CD4-positive, alpha-beta memory T cell (primary cell): ENCODE measurements at regions of chr1 and their contacts with region 1.

Region 1: DNA sequence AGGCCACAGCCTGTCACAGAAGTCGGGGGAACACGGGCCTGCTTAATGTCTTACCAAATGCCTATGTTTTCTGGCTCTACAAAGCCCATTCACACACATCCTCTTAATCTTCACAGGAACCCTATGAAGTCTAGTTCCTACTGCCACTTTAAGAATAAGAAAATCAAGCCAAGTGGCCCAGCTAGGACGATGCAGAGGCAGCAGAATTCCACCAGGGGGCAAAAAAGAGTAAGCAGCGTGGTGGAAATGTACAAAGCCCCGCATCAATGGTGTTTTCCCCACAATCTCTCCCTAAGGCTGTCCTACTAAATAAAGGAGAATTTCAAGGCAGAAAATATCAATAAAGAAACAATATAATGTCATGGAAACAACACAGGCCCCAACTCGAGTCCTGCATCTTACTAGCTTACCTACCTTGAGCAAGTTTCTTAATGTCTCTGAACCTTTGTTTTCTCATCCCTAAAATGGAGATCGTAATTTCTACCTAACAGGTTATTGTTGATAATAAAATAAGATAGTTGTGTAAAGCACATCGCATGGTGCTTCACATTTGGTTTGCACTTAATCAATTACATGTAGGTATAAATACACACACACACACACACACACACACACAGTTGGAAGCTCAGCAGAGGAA is 21.4 kb downstream of the SEC16B start:
- DNase-seq: peak in 1 of 5 donors; percentile 5
- H3K4me3 ChIP-seq: no peak overlapping the region
- H3K4me3 Mint-ChIP-seq: no peak overlapping the region
- H3K27ac ChIP-seq: no peak overlapping the region
- H3K27ac Mint-ChIP-seq: no peak overlapping the region
- H3K4me1 ChIP-seq: no peaks in the 10 kb centered on the region
- H3K4me1 Mint-ChIP-seq: no peaks in the 10 kb centered on the region
- H3K27me3 ChIP-seq: no peaks in the 10 kb centered on the region
- H3K27me3 Mint-ChIP-seq: no peaks in the 10 kb centered on the region

Region 2: DNA sequence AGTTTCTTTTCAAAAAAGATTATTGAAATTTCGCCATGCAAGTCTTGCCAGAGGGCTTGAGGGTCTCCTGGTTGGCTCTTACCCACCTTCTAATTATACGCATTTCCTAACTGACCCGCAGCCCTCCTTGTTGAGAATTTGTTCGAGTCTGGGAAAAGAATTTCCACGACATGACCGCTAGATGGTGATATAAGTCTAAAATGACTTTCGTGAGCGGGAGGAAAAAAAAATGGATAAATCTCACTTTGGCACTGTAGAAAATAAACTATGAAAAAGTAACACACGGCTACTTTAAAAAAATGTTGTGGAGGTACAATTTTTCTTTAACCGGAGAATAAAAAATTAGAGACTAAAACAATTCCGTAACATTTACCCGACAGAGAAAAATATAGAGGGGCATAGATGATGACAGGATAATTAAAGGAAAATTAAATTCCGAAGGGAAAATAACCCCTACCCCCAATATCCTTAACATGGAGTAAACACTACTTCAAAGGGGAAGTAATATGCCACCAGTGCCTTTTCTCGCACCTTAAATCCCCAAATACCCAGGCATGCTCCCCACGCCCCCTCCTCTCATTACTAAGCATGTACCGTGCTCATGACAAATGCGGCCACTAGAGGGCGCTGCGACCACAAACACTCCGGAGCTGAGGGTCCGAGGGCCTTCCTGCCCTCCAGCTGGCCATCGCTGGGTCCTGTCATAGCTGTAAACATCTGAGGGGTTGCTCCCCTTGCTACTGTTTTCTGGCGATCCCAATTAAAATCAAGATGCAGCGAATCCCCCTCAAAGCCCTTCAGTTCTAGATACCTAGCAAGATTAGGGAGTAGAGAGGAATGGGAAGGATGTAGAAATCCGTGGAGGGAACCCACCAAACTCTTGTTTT is 1050.9 kb before region 1 on chr1:
- CTCF ChIA-PET with region 1: no interaction called
- POLR2A ChIA-PET with region 1: no interaction called
- intact Hi-C with region 1: loop called (anchors 5 kb)
- DNase-seq: peak in 1 of 5 donors; percentile 3
- H3K4me3 ChIP-seq: no peak overlapping the region
- H3K4me3 Mint-ChIP-seq: peak overlapping the region in 2 of 8 donors; percentile 11 to 45
- H3K27ac ChIP-seq: no peak overlapping the region
- H3K27ac Mint-ChIP-seq: no peak overlapping the region
- H3K4me1 ChIP-seq: peaks cover 7% of the 10 kb centered on the region
- H3K4me1 Mint-ChIP-seq: peaks cover 0 to 8% (median 3%) of the 10 kb centered on the region in 4 donors
- H3K27me3 ChIP-seq: peaks cover 3% of the 10 kb centered on the region
- H3K27me3 Mint-ChIP-seq: peaks cover 5 to 6% of the 10 kb centered on the region in 2 donors

Region 3: DNA sequence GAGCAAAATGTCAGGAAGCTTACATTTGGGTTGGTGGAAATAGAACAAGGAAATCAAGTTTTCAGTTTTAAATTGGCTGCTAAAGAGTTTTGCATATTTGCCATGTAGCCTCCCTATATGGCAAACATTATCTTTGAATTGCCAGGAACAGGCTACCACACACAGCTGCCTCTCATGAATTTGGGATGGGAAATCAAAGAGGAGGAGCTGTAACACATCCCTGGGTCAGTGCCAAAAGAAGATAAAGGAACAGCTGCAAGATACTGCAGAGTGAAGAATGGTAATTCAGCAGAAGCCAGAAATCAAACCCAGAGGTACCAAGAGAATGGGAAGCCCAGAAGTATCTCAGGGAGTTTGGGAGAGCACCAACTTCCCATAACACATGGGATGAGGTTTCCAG is 126.9 kb after region 1 on chr1:
- CTCF ChIA-PET with region 1: no interaction called
- POLR2A ChIA-PET with region 1: no interaction called
- intact Hi-C with region 1: no loop called
- DNase-seq: no peak
- H3K4me3 ChIP-seq: no peak overlapping the region
- H3K4me3 Mint-ChIP-seq: no peak overlapping the region
- H3K27ac ChIP-seq: no peak overlapping the region
- H3K27ac Mint-ChIP-seq: peak overlapping the region in 1 of 7 donors; percentile 63
- H3K4me1 ChIP-seq: no peaks in the 10 kb centered on the region
- H3K4me1 Mint-ChIP-seq: no peaks in the 10 kb centered on the region
- H3K27me3 ChIP-seq: no peaks in the 10 kb centered on the region
- H3K27me3 Mint-ChIP-seq: peaks cover 0 to 2% of the 10 kb centered on the region in 2 donors